ENCODE measurements at regions of chr11 and their contacts with region 1.

Region 1: GRCh38 chr11:129861702-129862113 is 33.7 kb downstream of the NFRKB start:
- DNase-seq: peak in 1 of 2 experiments; percentile 51
- H3K4me3 ChIP-seq: no peak overlapping the region
- H3K27ac ChIP-seq: 0 out of 2 replicates have a peak overlapping the region, but pooled peaks have one; percentile 44
- H3K4me1 ChIP-seq: peaks cover 2 to 5% (median 4%) of the 10 kb centered on the region in 4 experiments; a peak in 6 of 7 replicates
- H3K27me3 ChIP-seq: no peaks in the 10 kb centered on the region
- CTCF ChIP-seq: no peak
- EP300 ChIP-seq: no peak
- POLR2A ChIP-seq: no peak
- RAD21 ChIP-seq: no peak

Region 2: GRCh38 chr11:129785383-129786111 is 76.2 kb before region 1 on chr11:
- CTCF ChIA-PET with region 1: interaction called, 10 read pairs
- POLR2A ChIA-PET with region 1: no interaction called
- DNase-seq: no peak
- H3K4me3 ChIP-seq: no peak overlapping the region
- H3K27ac ChIP-seq: no peak overlapping the region
- H3K4me1 ChIP-seq: no peaks in the 10 kb centered on the region
- H3K27me3 ChIP-seq: no peaks in the 10 kb centered on the region
- CTCF ChIP-seq: peak in 1 of 3 experiments; percentile 24; a peak in 1 of 4 replicates
- EP300 ChIP-seq: no peak
- POLR2A ChIP-seq: no peak
- RAD21 ChIP-seq: peak; percentile 38 to 63

Region 3: DNA sequence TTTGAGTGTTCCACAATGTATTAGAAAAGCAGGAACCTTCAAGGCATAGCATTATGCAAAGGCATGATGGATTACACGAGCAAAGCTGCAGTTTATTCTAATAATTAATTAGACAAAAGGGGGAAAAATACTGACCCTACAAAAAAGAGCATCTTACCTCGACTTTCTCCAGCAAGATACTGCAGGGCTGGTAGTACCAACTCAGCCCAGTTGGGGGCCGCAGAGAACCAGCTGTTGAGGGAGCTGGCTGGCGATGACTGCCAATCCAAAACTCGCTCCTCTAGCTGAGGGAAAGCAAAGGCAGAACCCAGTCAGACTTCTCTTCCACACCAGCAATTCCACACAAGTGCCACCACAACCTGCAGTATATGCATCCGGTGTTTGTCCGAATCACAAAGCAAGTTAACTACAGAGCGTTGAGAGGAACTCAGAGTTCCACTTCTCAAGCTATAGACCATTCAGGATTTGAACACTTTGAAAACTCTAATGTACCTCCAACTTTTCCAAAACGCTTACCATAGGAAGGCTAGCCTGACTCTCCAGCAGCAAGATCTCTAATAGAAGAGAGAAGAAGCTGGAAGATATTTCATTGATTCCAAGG is 20.0 kb after region 1 on chr11:
- CTCF ChIA-PET with region 1: interaction called, 10 read pairs
- POLR2A ChIA-PET with region 1: no interaction called
- DNase-seq: peak in 1 of 2 experiments; percentile 79
- H3K4me3 ChIP-seq: no peak overlapping the region
- H3K27ac ChIP-seq: no peak overlapping the region
- H3K4me1 ChIP-seq: no peaks in the 10 kb centered on the region
- H3K27me3 ChIP-seq: no peaks in the 10 kb centered on the region
- CTCF ChIP-seq: peak; percentile 53 to 78 (median 64)
- EP300 ChIP-seq: no peak
- POLR2A ChIP-seq: no peak
- RAD21 ChIP-seq: peak; percentile 59 to 69

Measured in H1 (cell line).